WTC11 (cell line): ENCODE measurements at regions of chr1 and their contacts with region 1.

Region 1: DNA sequence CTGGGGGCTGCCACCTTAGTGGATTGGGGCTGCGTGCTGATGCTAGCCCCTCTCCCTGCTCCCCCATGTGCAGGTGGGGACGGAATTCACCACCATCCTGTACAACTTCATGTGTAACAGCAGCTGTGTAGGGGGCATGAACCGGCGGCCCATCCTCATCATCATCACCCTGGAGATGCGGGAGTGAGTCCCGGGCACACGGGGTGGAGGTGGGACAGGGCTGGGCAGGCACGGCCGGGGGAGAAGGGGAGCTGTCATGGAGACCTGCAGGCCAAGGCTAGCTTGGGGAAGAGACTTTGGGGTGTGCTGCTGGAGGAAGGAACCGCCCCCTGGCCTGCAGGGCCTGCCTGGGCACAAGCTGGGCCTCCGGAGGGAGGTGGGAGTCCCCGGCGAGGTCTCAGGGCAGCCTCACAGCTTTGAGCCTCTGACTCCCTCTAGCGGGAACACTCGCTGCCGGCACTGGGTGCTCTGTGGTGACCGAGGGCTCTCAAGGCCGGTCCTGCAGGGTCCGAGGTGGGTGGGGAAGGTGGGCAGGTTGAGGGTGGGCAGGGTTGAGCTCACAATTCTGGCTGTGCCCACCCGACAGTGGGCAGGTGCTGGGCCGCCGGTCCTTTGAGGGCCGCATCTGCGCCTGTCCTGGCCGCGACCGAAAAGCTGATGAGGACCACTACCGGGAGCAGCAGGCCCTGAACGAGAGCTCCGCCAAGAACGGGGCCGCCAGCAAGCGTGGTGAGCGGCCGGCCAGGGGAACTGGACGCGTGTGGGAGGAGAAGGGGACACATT is 25.0 kb upstream of the CCDC27 start:
- DNase-seq: peak; percentile 73
- ATAC-seq: peak; percentile 68
- H3K4me3 Mint-ChIP-seq: no peak overlapping the region
- H3K27ac Mint-ChIP-seq: no peak overlapping the region
- H3K4me1 Mint-ChIP-seq: no peaks in the 10 kb centered on the region
- H3K27me3 Mint-ChIP-seq: peaks cover 4% of the 10 kb centered on the region; the same call in 1 of the 2 replicates
- CTCF ChIP-seq: no peak

Region 2: GRCh38 chr1:3564921-3565827 is 162.1 kb before region 1 on chr1:
- CTCF ChIA-PET with region 1: interaction called, 11 read pairs
- POLR2A ChIA-PET with region 1: no interaction called
- DNase-seq: peak; percentile 71
- ATAC-seq: peak; percentile 87
- H3K4me3 Mint-ChIP-seq: no peak overlapping the region
- H3K27ac Mint-ChIP-seq: no peak overlapping the region
- H3K4me1 Mint-ChIP-seq: no peaks in the 10 kb centered on the region
- H3K27me3 Mint-ChIP-seq: no peaks in the 10 kb centered on the region
- CTCF ChIP-seq: peak; percentile 89

Region 3: DNA sequence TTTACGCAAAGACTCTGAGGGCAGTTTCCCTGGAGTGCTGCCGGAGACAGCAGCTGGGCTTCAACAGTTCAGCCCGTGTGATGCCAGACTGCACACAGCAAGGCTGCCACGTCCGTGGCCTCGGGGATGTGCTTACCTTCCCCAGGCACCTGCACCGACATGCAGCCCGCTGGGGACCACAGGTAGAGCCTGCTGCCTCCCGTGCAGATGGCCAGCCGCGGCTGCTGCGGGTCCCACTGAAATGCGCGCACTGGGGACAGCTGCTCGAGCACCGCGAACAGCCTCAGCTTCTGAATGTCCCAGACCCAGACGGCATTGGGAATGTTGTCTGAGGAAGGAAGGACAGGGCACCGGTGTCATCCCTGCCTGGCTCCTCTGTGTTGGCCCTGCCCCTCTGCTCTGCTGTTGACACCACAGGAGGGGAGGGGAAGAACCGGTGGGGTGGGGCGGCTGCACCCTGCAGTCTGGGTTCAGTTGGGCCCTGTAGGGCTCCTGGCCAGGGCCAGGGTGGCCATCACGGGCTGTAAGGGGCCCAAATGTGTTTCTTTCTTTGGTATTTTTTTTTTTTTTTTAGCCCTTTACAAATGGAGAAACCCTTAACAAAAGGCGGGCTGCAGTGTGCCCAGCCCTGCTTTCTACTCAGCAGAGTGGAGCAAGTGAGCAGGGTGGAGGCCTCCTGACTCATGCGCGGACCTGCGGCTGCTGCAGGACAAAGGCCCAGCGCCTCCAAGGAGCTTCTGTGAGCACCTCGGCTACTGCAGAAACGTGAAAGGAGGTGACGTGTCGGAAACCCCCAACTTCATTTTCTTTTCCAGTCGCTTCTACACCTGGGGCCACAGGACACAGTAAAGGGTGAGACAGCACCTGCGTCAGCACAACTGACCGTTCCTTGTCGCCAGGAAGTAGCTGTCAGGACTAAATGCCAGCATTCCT is 95.6 kb before region 1 on chr1:
- CTCF ChIA-PET with region 1: interaction called, 19 read pairs
- POLR2A ChIA-PET with region 1: no interaction called
- DNase-seq: peak; percentile 12
- ATAC-seq: peak; percentile 58
- H3K4me3 Mint-ChIP-seq: no peak overlapping the region
- H3K27ac Mint-ChIP-seq: 0 out of 2 replicates have a peak overlapping the region, but pooled peaks have one; percentile 27
- H3K4me1 Mint-ChIP-seq: no peaks in the 10 kb centered on the region
- H3K27me3 Mint-ChIP-seq: no peaks in the 10 kb centered on the region
- CTCF ChIP-seq: no peak

Region 4: GRCh38 chr1:3683992-3684391 is 43.2 kb before region 1 on chr1:
- CTCF ChIA-PET with region 1: interaction called, 17 read pairs
- POLR2A ChIA-PET with region 1: no interaction called
- DNase-seq: peak; percentile 88
- ATAC-seq: peak; percentile 74
- H3K4me3 Mint-ChIP-seq: no peak overlapping the region; the same call in 1 of the 2 replicates
- H3K27ac Mint-ChIP-seq: no peak overlapping the region
- H3K4me1 Mint-ChIP-seq: peaks cover 15% of the 10 kb centered on the region
- H3K27me3 Mint-ChIP-seq: peaks cover 7% of the 10 kb centered on the region
- CTCF ChIP-seq: no peak

Region 5: GRCh38 chr1:3712573-3713535 is 14.4 kb before region 1 on chr1:
- CTCF ChIA-PET with region 1: interaction called, 30 read pairs
- POLR2A ChIA-PET with region 1: no interaction called
- DNase-seq: no peak
- ATAC-seq: no peak
- H3K4me3 Mint-ChIP-seq: no peak overlapping the region
- H3K27ac Mint-ChIP-seq: no peak overlapping the region
- H3K4me1 Mint-ChIP-seq: peaks cover 9% of the 10 kb centered on the region
- H3K27me3 Mint-ChIP-seq: peaks cover 3% of the 10 kb centered on the region
- CTCF ChIP-seq: no peak

Region 6: GRCh38 chr1:3775490-3776230 is 48.4 kb after region 1 on chr1:
- CTCF ChIA-PET with region 1: interaction called, 10 read pairs
- POLR2A ChIA-PET with region 1: no interaction called
- DNase-seq: peak; percentile 64
- ATAC-seq: peak; percentile 12
- H3K4me3 Mint-ChIP-seq: no peak overlapping the region; the same call in 1 of the 2 replicates
- H3K27ac Mint-ChIP-seq: no peak overlapping the region
- H3K4me1 Mint-ChIP-seq: peaks cover 22% of the 10 kb centered on the region
- H3K27me3 Mint-ChIP-seq: no peaks in the 10 kb centered on the region; the same call in none of the 2 replicates
- CTCF ChIP-seq: peak; percentile 27; the same call in 1 of the 2 replicates